ENCODE measurements at regions of chr18 and their contacts with region 1.

Region 1: GRCh38 chr18:57803103-57803969 is at the start of gene ATP8B1:
- DNase-seq: no peak
- ATAC-seq: peak; percentile 91
- H3K4me3 ChIP-seq: peak within 1 kb of the TSS; percentile 68 to 73
- H3K27ac ChIP-seq: peak within 1 kb of the TSS; percentile 65
- H3K4me1 ChIP-seq: peaks cover 11% of the 10 kb centered on the region
- H3K27me3 ChIP-seq: no peaks in the 10 kb centered on the region
- CTCF ChIP-seq: no peak
- total RNA-seq, gene ATP8B1: 12.5 TPM

Region 2: DNA sequence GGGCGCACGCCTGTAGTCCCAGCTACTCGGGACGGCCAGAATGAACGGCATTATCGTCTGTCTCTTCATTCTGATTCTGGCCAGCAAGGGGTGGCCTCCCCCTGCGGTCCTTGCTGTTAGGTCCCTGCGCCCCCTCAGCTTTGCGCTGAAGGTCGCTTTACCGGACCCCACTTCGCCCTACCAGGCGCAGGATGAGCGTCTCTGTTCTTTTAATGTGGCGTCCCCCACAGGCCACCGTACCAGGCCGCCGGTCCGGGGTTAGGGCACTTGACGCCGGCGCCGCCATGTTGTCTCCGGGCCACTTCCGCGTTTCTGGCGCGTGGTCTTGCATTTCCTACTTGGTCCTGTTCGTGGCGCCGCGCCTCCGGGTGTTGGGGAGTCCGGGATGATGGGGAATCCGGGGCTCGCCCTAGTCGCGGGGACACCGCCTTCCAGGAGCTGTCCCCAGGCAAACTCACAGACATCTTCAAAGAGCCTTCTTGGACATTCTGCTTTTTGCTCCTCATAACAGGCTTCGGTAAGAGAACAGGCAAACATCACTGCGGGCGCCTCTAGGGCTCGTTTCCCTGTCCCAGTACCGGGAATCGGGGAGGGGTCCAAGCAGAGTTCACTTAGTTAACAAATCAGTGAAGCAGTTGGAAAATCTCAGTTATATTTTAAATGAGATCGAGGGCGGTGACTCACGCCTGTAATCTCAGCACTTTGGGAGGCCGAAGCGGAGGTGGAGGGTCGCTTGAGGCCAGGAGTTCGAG is 173.2 kb before region 1 on chr18:
- CTCF ChIA-PET with region 1: no interaction called
- POLR2A ChIA-PET with region 1: no interaction called
- in situ Hi-C with region 1: no loop called
- intact Hi-C with region 1: loop called (anchors 5 kb)
- DNase-seq: peak; percentile 58
- ATAC-seq: peak; percentile 97
- H3K4me3 ChIP-seq: peak overlapping the region; percentile 69 to 74
- H3K27ac ChIP-seq: peak overlapping the region; percentile 93
- H3K4me1 ChIP-seq: peaks cover 6% of the 10 kb centered on the region
- H3K27me3 ChIP-seq: no peaks in the 10 kb centered on the region
- CTCF ChIP-seq: peak; percentile 79

Region 3: DNA sequence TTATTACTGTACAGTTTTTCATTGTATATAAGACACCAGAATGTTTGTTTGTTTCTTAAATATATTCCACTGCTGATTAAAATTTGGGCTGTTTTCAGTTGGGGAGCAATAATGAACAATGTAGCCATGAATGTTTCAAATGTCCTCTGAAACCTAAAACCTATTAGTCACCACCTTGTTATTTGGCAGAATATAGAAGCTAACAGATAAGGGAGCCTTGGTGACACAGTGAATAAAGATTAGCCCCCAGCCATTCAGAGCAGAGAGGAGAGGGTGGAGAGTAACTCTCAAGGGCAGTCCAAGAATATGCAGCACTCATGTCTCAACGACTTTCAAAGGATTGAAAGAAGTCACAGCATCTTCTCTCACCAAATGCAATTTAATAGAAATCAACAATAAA is 42.9 kb after region 1 on chr18:
- CTCF ChIA-PET with region 1: no interaction called
- POLR2A ChIA-PET with region 1: no interaction called
- in situ Hi-C with region 1: no loop called
- intact Hi-C with region 1: no loop called
- DNase-seq: no peak
- ATAC-seq: peak; percentile 88
- H3K4me3 ChIP-seq: no peak overlapping the region
- H3K27ac ChIP-seq: no peak overlapping the region
- H3K4me1 ChIP-seq: 0 out of 2 replicates have a peak, but pooled peaks cover 3% of the 10 kb centered on the region
- H3K27me3 ChIP-seq: no peaks in the 10 kb centered on the region
- CTCF ChIP-seq: no peak

Region 4: DNA sequence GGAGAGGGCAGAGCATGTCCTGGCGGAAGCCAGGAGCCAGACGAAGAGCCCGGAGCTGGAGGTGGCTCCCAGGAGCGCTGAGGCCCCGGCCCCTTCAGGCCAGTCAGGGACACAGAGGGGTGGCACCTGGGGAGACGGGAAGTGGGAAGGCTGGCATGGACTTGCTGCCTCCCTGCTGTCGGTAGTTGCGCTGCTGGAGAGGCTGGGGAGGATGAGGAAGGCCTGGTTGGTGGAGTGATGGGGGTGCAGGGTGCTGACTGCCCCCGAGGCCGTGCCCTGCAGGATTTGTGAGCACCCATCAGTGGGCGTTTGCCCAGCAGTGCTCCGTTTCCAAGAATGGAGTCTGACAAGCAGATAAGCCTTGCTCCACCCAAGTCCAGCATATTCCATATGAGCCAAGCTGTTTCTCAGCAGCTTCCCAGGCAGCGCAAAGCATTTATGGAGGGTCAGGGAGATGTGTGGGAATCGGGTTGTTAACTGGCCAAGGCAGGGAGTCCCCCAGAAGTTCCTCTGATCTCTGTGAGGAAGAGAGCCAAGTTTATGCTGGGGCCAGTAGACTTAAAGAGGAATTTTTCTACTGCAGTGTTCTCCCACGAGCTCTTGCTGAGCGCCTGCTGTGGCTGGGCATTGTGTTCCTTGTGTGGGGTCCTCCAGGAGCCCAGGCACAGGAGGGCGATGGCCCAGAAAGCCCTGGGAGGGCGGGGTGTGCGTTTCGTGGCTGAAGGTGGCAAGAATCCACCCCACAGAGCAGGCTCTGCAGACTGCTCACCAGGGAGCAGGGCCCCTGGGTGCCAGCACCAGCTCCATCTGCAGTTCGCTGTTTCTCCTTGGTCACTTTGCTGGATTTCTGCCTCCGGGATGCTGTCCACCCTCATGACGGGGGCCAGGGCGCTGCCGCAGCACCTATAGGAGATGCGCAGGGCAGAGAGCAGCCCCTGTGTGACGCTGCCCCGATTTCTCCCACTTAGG is 575.4 kb after region 1 on chr18:
- CTCF ChIA-PET with region 1: no interaction called
- POLR2A ChIA-PET with region 1: no interaction called
- in situ Hi-C with region 1: no loop called
- intact Hi-C with region 1: no loop called
- DNase-seq: no peak
- ATAC-seq: no peak
- H3K4me3 ChIP-seq: no peak overlapping the region
- H3K27ac ChIP-seq: no peak overlapping the region
- H3K4me1 ChIP-seq: no peaks in the 10 kb centered on the region
- H3K27me3 ChIP-seq: no peaks in the 10 kb centered on the region
- CTCF ChIP-seq: no peak